AG04449 (cell line): ENCODE measurements at regions of chr10 and their contacts with region 1.

Region 1: GRCh38 chr10:51422311-51423120 is 276.9 kb downstream of the CSTF2T start:
- DNase-seq: peak; percentile 19
- H3K4me3 ChIP-seq: no peak overlapping the region
- CTCF ChIP-seq: peak; percentile 73

Region 2: DNA sequence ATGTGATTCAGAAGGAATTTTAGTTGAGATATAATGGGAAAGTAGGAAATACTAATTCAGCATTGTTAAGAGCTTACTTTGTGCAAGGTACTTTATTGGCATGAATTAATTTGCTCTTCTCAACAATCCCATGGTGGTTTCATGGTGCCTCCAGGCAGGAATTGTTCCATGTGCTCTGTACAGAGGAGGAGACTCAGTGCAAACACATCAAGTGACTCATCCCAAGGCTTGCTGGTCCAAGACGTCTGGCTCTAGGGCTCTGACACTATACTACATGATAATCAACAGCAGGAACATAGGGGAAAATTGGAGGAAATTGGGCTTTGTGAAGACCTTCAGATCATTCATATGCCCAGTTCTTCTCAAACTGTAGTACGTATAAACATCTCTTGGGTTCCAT is 414.7 kb before region 1 on chr10:
- CTCF ChIA-PET with region 1: interaction called, 16 read pairs
- POLR2A ChIA-PET with region 1: no interaction called
- DNase-seq: no peak
- H3K4me3 ChIP-seq: no peak overlapping the region
- CTCF ChIP-seq: no peak

Region 3: GRCh38 chr10:51074238-51075028 is 348.1 kb before region 1 on chr10 and contains the start of gene PRKG1:
- CTCF ChIA-PET with region 1: interaction called, 11 read pairs
- POLR2A ChIA-PET with region 1: interaction called, 3 read pairs
- DNase-seq: no peak
- H3K4me3 ChIP-seq: peak within 1 kb of the TSS; percentile 80
- CTCF ChIP-seq: no peak

Region 4: DNA sequence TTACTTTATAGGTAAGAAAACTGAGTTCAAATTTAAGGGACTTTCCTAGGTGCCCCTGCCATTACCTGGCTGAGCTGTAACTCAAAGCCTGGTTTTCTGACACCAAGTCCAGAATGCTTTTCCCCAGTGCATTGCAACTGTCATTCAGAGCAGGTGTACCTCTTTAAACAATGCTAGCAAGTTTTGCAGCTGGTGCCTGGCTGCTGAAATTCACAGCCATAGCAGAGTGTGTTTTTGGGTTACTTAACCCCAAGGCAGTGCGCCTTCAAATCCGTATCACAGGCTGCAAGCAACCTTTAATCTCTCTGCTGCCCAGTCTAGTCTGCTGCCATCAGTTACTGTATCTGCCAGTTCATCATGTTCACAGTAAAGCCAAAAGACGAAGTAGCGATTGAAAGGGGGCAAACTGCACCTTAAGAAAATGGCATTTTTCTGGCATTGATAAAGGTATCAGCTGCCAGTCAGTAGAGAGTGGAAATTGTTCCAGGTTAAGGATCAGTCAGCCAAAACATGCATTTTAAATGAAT is 11.5 kb after region 1 on chr10:
- CTCF ChIA-PET with region 1: interaction called, 22 read pairs
- POLR2A ChIA-PET with region 1: no interaction called
- DNase-seq: no peak
- H3K4me3 ChIP-seq: no peak overlapping the region
- CTCF ChIP-seq: no peak